ENCODE measurements at regions of chr14 and their contacts with region 1.

Region 1: GRCh38 chr14:24215495-24216344 is at the start of gene MDP1:
- DNase-seq: peak; percentile 95
- ATAC-seq: peak; percentile 81
- H3K4me3 ChIP-seq: peak within 1 kb of the TSS; percentile 67 to 98 (median 81)
- H3K27ac ChIP-seq: peak within 1 kb of the TSS; percentile 72
- H3K4me1 ChIP-seq: peaks cover 39% of the 10 kb centered on the region
- H3K27me3 ChIP-seq: no peaks in the 10 kb centered on the region; a peak in 1 of 5 replicates
- CTCF ChIP-seq: peak; percentile 100
- EP300 ChIP-seq: peak in 1 of 2 experiments; percentile 74; a peak in 3 of 4 replicates
- POLR2A ChIP-seq: peak in 1 of 2 experiments; percentile 97; a peak in 2 of 4 replicates
- RAD21 ChIP-seq: peak; percentile 96
- total RNA-seq, gene MDP1: 48.7 and 66.0 TPM in 2 replicates

Region 2: DNA sequence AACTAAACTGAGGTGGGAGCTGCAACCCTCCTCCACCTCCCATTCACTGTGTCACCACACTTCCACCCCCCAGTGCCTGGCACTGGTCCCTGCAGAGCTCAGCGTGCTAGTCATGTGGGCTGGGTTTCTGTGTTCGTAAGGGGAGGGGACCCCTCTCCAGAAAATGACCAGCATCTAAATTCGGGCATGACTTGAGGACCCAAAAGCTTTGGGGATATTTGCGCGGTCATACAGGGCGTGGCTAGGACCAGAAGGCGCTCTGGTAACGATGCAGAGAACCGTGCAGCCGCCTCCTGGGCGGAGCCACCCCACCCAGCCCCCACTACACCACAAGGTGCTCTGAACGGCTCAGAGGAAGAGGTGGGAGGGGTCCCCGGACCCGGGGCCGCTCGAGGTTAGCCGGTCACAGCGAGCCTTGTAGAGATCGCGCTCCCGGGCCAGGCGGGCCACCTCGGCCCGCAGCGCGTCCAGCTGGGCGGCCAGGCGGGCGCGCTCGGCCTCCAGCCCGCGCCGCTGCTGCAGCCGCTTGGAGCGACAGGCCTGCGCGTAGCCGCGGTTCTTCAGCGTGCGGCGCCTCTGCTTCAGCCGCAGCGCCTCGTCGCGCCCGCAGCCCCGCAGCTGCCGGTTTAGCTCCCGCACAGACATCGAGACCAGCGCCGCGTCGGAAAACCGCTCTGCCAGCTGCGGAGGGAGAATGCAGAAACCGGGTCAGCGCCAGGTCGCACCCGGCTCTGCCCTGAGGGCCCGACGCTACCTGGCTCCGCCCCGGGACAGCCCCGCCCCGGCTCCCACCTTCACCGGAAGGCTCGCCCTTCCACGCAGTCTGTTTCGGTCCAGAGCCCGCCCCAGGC is 134.6 kb before region 1 on chr14:
- CTCF ChIA-PET with region 1: no interaction called
- POLR2A ChIA-PET with region 1: interaction called, 14 read pairs
- in situ Hi-C with region 1: no loop called
- intact Hi-C with region 1: no loop called
- DNase-seq: peak; percentile 38
- ATAC-seq: peak; percentile 83
- H3K4me3 ChIP-seq: peak overlapping the region; percentile 53 to 77 (median 73)
- H3K27ac ChIP-seq: no peak overlapping the region
- H3K4me1 ChIP-seq: peaks cover 22% of the 10 kb centered on the region
- H3K27me3 ChIP-seq: peaks cover 18 to 81% of the 10 kb centered on the region in 2 experiments
- CTCF ChIP-seq: peak; percentile 2; the same call in 1 of the 2 replicates
- EP300 ChIP-seq: no peak
- POLR2A ChIP-seq: peak in 1 of 2 experiments; percentile 33; a peak in 1 of 4 replicates
- RAD21 ChIP-seq: peak; percentile 55; the same call in 1 of the 2 replicates

Region 3: DNA sequence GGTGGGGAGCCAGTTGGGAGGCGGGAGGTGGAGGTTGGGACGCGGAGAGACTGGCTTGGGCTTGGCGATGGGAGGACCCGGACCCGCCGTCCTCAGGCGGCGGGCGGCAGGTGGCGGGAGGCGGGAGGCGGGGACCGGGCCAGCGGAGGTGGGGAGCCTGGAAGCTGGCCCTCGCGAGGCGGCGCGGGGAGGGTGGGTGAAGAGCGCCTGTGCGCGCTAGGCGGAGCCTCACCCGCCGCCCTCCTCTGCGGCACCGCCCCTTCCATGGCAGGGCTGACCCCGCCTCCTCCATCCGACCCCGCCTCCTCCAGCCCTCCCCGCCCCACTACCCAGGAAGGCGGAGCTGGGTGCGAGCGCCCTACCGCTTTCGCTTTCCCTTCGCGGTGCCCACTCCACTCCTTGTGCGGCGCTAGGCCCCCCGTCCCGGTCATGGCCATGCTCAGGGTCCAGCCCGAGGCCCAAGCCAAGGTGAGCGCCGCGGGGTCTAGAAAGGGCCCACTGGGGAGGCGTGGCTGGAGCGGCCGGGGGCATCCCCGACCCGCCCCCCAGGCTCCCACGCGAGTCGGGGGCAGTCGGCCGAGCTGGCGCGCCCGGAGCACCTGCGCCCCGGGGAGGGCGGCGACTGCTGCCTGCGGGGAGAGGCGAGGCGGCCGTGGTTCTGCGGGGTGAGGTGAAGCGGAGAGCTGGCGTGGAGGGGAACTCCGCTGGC is 79.7 kb before region 1 on chr14 and contains the start of gene PSME1:
- CTCF ChIA-PET with region 1: no interaction called
- POLR2A ChIA-PET with region 1: interaction called, 42 read pairs
- in situ Hi-C with region 1: no loop called
- intact Hi-C with region 1: loop called (anchors 1 kb)
- DNase-seq: peak; percentile 93
- ATAC-seq: peak; percentile 86
- H3K4me3 ChIP-seq: peak within 1 kb of the TSS; percentile 91 to 98 (median 93)
- H3K27ac ChIP-seq: peak within 1 kb of the TSS; percentile 75
- H3K4me1 ChIP-seq: peaks cover 64% of the 10 kb centered on the region
- H3K27me3 ChIP-seq: no peaks in the 10 kb centered on the region; a peak in 1 of 5 replicates
- CTCF ChIP-seq: peak; percentile 47; the same call in 1 of the 2 replicates
- EP300 ChIP-seq: peak; percentile 23 to 43; a peak in 1 of 4 replicates
- POLR2A ChIP-seq: peak in 1 of 2 experiments; percentile 31; a peak in 1 of 4 replicates
- RAD21 ChIP-seq: peak; percentile 71
- total RNA-seq, gene PSME1: 608 and 713 TPM in 2 replicates

Region 4: DNA sequence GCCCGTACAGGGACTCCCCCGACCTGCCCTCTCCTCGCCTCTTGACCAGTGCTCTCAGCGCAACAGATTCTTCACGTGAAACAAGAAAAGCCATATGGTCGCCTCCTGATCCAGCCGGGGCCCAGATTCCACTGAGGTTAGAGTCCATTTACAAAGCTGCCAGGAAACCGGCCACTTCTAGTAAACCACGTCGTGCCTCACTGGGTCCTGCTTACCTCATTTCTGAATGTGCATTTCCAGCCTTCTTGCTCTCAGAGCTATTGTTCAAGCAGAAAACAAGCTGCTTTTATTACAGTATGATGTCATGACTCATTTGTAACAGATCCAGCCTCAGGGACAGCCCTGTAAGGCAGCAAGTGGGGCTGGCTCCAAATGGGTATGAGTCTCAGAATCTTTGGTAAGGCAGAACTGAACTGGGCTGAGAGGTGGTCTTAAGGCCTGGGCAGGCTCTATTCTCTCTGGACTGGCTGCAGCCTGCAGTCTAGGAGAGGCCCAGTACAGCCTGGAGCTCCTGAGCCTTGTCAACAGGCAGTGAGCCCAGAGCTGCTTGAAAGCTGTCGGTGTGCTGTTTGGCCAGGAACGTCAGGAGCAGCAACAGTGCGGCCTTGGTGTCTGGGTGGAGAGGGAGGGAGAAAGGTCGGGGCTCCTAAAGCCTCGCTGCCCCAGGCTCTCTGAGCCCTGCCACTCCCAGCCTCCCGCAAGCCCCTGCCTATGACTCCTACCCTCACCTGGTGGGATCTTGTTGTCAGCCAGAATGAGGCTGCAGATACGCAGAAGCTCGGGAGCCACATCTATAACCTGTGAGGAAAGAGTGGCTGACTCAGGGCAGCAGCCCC is 35.5 kb before region 1 on chr14:
- CTCF ChIA-PET with region 1: no interaction called
- POLR2A ChIA-PET with region 1: interaction called, 14 read pairs
- in situ Hi-C with region 1: no loop called
- intact Hi-C with region 1: no loop called
- DNase-seq: no peak
- ATAC-seq: no peak
- H3K4me3 ChIP-seq: no peak overlapping the region
- H3K27ac ChIP-seq: no peak overlapping the region
- H3K4me1 ChIP-seq: no peaks in the 10 kb centered on the region
- H3K27me3 ChIP-seq: no peaks in the 10 kb centered on the region
- CTCF ChIP-seq: no peak
- EP300 ChIP-seq: no peak
- POLR2A ChIP-seq: no peak
- RAD21 ChIP-seq: no peak

Region 5: DNA sequence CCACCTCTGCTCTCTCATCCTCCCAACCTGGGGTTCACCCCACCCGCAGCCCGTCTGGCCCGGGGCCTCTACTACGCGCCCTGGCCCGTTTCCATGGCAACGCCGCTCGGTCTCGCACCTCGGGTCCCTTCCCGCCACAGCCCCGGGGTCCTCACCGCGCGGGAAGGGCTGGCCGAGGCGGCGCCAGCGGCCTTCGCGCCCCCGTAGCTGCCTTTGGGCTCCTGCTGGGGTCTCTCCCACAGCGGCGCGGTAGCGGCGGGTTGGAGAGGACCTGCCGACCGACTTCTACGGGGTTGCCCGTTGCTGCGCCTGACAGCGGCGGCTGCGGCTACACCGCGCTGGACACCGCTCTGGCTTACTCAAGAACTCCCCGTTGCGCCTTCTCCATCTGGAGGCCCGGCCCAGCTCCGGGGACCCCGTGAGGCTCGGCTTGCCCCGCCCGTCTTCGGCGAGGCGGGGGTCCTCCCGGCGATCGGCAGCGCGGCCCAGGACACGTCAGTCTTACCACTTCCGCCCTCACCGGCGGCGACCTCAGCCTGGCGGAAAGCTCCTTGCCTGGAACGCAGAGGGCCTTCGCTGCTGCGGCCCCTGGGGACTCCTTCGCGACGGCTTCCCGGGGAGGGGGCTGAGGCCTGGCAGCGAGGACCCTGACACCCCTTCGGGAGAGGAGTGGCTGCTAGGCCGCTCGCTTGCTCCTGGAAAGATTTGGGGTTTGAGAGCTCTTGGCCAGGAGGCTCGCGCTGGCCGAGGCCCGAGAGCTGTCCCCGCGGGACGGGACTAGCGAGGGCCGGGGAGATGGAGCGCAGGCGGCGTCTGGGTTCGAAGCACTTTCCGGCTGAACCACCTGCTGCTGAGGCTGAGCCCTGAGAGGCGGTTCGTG is 20.3 kb before region 1 on chr14 and contains the start of gene TM9SF1:
- CTCF ChIA-PET with region 1: no interaction called
- POLR2A ChIA-PET with region 1: interaction called, 230 read pairs
- in situ Hi-C with region 1: no loop called
- intact Hi-C with region 1: loop called (anchors 1 kb)
- DNase-seq: peak; percentile 93
- ATAC-seq: peak; percentile 94
- H3K4me3 ChIP-seq: peak within 1 kb of the TSS; percentile 79 to 91 (median 85)
- H3K27ac ChIP-seq: peak within 1 kb of the TSS; percentile 84
- H3K4me1 ChIP-seq: peaks cover 65% of the 10 kb centered on the region
- H3K27me3 ChIP-seq: no peaks in the 10 kb centered on the region; a peak in 1 of 5 replicates
- CTCF ChIP-seq: peak; percentile 54
- EP300 ChIP-seq: peak; percentile 7 to 39; a peak in 1 of 4 replicates
- POLR2A ChIP-seq: peak in 1 of 2 experiments; percentile 81; a peak in 2 of 4 replicates
- RAD21 ChIP-seq: peak; percentile 52
- total RNA-seq, gene TM9SF1: 56.4 and 110 TPM in 2 replicates

Region 6: GRCh38 chr14:24251880-24252288 is 36.2 kb after region 1 on chr14:
- CTCF ChIA-PET with region 1: no interaction called
- POLR2A ChIA-PET with region 1: interaction called, 19 read pairs
- in situ Hi-C with region 1: no loop called
- intact Hi-C with region 1: no loop called
- DNase-seq: no peak
- ATAC-seq: peak; percentile 32
- H3K4me3 ChIP-seq: no peak overlapping the region
- H3K27ac ChIP-seq: peak overlapping the region; percentile 59
- H3K4me1 ChIP-seq: peaks cover 35% of the 10 kb centered on the region
- H3K27me3 ChIP-seq: no peaks in the 10 kb centered on the region
- CTCF ChIP-seq: no peak
- EP300 ChIP-seq: no peak
- POLR2A ChIP-seq: 0 out of 4 replicates have a peak, but pooled peaks of 1 of the 2 experiments have one; percentile 2
- RAD21 ChIP-seq: no peak

Region 7: GRCh38 chr14:24310646-24311604 is 95.2 kb after region 1 on chr14 and contains the start of gene LTB4R:
- CTCF ChIA-PET with region 1: interaction called, 7 read pairs
- POLR2A ChIA-PET with region 1: interaction called, 67 read pairs
- in situ Hi-C with region 1: no loop called
- intact Hi-C with region 1: no loop called
- DNase-seq: no peak
- ATAC-seq: no peak
- H3K4me3 ChIP-seq: no peak within 1 kb of the TSS
- H3K27ac ChIP-seq: peak within 1 kb of the TSS; percentile 4
- H3K4me1 ChIP-seq: peaks cover 61% of the 10 kb centered on the region
- H3K27me3 ChIP-seq: no peaks in the 10 kb centered on the region; a peak in 1 of 5 replicates
- CTCF ChIP-seq: no peak
- EP300 ChIP-seq: no peak
- POLR2A ChIP-seq: no peak
- RAD21 ChIP-seq: no peak
- total RNA-seq, gene LTB4R: 1.00 and 3.2 TPM in 2 replicates